AG04450 (cell line): ENCODE measurements at regions of chr10 and their contacts with region 1.

Region 1: GRCh38 chr10:47311932-47312662 is 10.2 kb upstream of the GDF2 start:
- DNase-seq: peak; percentile 43
- H3K4me3 ChIP-seq: no peak overlapping the region
- H3K27ac ChIP-seq: no peak overlapping the region
- H3K27me3 ChIP-seq: peaks cover 13% of the 10 kb centered on the region
- CTCF ChIP-seq: peak; percentile 96

Region 2: DNA sequence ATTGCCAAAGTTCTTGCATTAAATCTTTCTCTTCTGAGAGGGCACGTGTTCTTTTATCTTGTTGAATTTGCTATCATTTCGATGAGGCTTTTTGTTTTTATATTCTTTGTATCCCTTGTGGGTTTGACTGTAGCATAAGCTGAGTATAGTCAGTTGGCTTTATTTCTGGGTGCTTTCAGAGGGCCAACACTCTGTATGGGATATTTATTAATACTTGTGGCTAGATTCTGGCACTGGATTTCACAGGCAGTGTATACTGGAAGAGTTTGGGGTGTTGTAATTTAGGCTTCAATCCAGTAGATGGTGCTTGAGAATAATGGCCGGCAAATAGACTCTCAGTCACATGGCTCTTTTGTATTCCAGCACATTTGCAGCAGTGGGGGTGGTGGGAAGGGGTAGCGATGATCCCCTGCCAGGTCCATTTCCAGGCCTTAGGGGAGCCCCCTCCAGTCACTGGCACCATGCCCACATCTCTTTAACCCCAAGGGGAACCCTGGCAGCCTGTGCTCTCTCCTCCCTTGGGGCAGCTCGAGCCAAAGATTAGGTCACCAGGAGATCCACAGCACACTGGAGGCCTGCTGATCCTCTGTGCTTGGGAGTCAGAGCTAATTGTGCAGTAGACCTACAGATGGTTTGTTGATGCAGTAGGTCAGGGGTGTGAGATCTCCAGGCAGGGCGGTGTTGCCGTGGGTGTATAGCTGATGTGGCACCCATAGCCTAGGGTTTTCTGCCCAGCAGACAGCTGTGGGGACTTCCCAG is 319.1 kb before region 1 on chr10:
- CTCF ChIA-PET with region 1: interaction called, 58 read pairs
- POLR2A ChIA-PET with region 1: no interaction called
- DNase-seq: no peak
- H3K4me3 ChIP-seq: no peak overlapping the region
- H3K27ac ChIP-seq: no peak overlapping the region
- H3K27me3 ChIP-seq: no peaks in the 10 kb centered on the region
- CTCF ChIP-seq: peak; percentile 65

Region 3: DNA sequence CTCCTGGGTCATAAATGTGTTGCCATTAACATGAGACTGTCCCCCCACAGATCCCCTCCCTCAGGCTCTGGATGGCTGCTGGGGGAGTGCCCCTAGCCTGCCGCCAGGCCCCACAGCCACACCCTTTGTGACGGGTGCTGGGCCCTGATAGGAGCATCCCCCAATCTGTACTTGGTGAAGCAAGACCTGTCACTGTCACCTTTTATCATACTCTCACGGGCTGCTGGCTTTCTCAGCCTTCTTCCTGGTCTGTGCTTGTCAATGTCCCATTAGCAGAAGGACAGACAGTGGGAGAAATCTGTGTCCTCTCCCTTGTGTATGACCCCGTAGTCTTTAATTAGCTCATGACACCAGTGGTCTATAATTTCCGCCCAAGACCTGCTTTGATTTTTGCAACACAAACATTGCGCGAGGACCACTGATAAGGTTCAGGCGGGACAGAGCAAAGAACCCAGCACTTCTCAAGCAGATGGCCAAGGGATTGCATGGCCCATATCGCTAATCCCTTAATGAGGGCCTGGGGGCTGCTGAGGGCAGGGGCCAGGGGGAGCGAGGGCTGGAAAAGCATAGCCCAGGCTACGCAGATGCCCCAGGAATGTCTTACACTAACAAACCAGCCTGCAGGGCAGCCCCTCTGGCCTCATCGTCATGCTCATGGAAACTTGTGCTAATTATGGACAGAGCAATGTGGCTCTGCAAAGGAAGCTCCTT is 273.1 kb before region 1 on chr10:
- CTCF ChIA-PET with region 1: interaction called, 167 read pairs
- POLR2A ChIA-PET with region 1: no interaction called
- DNase-seq: no peak
- H3K4me3 ChIP-seq: no peak overlapping the region
- H3K27ac ChIP-seq: no peak overlapping the region
- H3K27me3 ChIP-seq: peaks cover 14% of the 10 kb centered on the region
- CTCF ChIP-seq: no peak

Region 4: DNA sequence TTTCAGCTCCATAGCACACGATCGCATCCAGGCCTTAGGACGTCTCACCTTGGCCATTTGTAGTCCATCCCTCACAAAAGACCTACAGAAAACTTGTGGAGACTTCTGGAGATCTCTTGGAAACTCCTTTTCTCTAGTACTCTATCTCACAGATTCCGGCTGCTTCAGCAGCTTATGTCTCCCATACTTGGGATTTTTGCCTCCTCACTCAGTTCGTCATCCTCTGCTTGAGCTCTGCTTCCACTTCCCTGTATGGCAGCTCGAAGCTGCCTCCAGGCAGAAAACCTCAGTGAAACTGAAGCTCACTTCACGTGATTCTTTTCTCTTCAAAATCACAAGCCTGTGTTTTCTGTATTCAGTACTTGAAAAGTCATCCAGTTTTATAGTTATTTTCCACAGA is 190.8 kb before region 1 on chr10:
- CTCF ChIA-PET with region 1: no interaction called
- POLR2A ChIA-PET with region 1: no interaction called
- DNase-seq: no peak
- H3K4me3 ChIP-seq: no peak overlapping the region
- H3K27ac ChIP-seq: no peak overlapping the region
- H3K27me3 ChIP-seq: no peaks in the 10 kb centered on the region
- CTCF ChIP-seq: no peak

Region 5: DNA sequence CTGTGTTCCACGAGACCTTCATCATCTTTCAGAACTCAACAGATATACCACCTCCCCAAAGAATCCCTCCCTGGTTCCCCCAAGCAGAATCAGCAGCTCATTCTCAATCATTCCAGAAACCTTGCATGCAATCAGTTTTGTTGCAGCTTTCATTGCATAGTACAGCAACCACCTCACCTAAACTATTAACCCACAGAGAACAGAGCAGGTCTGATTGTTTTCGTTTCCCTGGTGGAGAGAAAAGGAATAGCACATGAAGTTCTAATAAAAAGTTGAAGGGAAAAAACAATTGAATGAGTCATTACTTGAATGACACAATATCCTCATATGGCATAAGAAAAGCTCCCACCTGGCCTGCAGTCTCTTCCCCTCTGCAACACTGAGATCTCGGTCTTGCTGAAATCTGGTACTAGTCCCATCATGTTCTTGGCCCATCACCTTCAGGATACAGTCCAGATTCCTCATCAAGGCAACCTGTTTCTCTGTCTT is 159.2 kb before region 1 on chr10:
- CTCF ChIA-PET with region 1: no interaction called
- POLR2A ChIA-PET with region 1: no interaction called
- DNase-seq: no peak
- H3K4me3 ChIP-seq: no peak overlapping the region
- H3K27ac ChIP-seq: no peak overlapping the region
- H3K27me3 ChIP-seq: no peaks in the 10 kb centered on the region
- CTCF ChIP-seq: peak; percentile 42; the same call in 1 of the 2 replicates

Region 6: GRCh38 chr10:47195274-47195885 is 116.7 kb before region 1 on chr10:
- CTCF ChIA-PET with region 1: no interaction called
- POLR2A ChIA-PET with region 1: no interaction called
- DNase-seq: no peak
- H3K4me3 ChIP-seq: no peak overlapping the region
- H3K27ac ChIP-seq: no peak overlapping the region
- H3K27me3 ChIP-seq: peaks cover 2% of the 10 kb centered on the region
- CTCF ChIP-seq: no peak

Region 7: DNA sequence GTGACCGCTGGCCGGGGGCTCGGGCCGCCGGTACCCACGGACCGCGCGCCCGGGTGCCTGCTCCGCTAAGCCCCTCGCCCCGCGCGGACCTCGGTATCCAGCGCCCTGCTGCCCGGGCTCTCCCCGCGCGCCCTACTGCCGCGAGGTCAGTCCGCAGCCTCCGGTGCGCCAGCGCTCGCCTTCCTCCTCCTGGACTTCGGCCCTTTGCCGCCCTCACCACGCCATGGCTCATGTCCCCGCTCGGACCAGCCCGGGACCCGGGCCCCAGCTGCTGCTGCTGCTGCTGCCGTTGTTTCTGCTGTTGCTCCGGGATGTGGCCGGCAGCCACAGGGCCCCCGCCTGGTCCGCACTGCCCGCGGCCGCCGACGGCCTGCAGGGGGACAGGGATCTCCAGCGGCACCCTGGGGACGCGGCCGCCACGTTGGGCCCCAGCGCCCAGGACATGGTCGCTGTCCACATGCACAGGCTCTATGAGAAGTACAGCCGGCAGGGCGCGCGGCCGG is 11.6 kb before region 1 on chr10:
- CTCF ChIA-PET with region 1: interaction called, 10 read pairs
- POLR2A ChIA-PET with region 1: no interaction called
- DNase-seq: no peak
- H3K4me3 ChIP-seq: peak overlapping the region; percentile 34; the same call in 1 of the 2 replicates
- H3K27ac ChIP-seq: no peak overlapping the region
- H3K27me3 ChIP-seq: peaks cover 66% of the 10 kb centered on the region
- CTCF ChIP-seq: no peak

Region 8: GRCh38 chr10:47334466-47335295 is 22.6 kb after region 1 on chr10:
- CTCF ChIA-PET with region 1: no interaction called
- POLR2A ChIA-PET with region 1: no interaction called
- DNase-seq: no peak
- H3K4me3 ChIP-seq: no peak overlapping the region
- H3K27ac ChIP-seq: no peak overlapping the region
- H3K27me3 ChIP-seq: peaks cover 3% of the 10 kb centered on the region
- CTCF ChIP-seq: no peak